ENCODE measurements at regions of chr17 and their contacts with region 1.

Region 1: GRCh38 chr17:80477647-80478478 is 1.5 kb upstream of the NPTX1 start:
- DNase-seq: no peak
- H3K4me3 ChIP-seq: no peak overlapping the region; the same call in 1 of the 2 replicates
- H3K4me3 Mint-ChIP-seq: no peak overlapping the region
- H3K27ac Mint-ChIP-seq: no peak overlapping the region
- H3K4me1 ChIP-seq: peaks cover 29% of the 10 kb centered on the region
- H3K4me1 Mint-ChIP-seq: peaks cover 11% of the 10 kb centered on the region
- H3K27me3 ChIP-seq: peaks cover 6% of the 10 kb centered on the region
- H3K27me3 Mint-ChIP-seq: peaks cover 34% of the 10 kb centered on the region
- CTCF ChIP-seq: no peak

Region 2: DNA sequence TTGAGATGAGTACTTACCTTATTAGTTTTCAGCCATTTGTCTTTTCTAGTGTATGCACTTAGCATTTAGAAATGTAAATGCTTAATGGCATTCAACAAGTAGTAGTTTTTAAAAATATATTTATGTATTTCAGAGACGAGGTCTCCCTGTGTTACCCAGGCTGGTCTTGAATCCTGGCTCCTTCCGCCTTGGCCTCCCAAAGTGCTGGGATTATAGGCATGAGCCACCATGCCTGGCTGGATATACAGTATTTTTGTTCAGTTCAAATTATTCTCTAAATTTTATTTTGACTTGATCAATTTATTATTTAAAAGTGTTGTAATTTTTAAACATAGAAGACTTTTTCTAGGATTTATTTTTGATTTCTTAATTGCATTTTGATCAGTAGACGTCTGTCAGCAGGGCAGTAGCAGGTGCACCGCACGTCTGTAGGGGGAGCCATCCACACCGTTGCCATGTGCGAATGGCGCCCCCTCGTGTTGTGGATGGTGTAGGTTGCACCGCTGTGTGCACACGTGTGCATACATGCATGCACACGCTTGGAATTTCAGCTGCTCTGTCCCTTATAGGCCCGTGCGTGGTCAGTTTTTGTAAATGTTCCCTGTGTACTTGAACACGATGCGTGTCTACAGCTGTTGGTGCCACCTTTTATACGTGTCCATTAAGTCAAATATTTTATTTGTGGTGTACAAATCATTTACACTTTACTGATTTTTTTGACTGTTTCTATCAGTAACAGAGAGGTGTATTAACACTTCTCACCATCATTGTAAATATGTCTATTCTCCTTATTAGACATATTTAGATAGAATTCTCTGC is 97.4 kb after region 1 on chr17:
- CTCF ChIA-PET with region 1: interaction called, 3 read pairs
- POLR2A ChIA-PET with region 1: no interaction called
- intact Hi-C with region 1: loop called (anchors 5 kb)
- DNase-seq: peak; percentile 85 to 92
- H3K4me3 ChIP-seq: no peak overlapping the region
- H3K4me3 Mint-ChIP-seq: no peak overlapping the region
- H3K27ac Mint-ChIP-seq: no peak overlapping the region
- H3K4me1 ChIP-seq: no peaks in the 10 kb centered on the region
- H3K4me1 Mint-ChIP-seq: peaks cover 15% of the 10 kb centered on the region
- H3K27me3 ChIP-seq: no peaks in the 10 kb centered on the region
- H3K27me3 Mint-ChIP-seq: no peaks in the 10 kb centered on the region
- CTCF ChIP-seq: peak; percentile 99 to 100

Measured in Caco-2 (cell line).